ENCODE measurements at regions of chr11 and their contacts with region 1.

Region 1: DNA sequence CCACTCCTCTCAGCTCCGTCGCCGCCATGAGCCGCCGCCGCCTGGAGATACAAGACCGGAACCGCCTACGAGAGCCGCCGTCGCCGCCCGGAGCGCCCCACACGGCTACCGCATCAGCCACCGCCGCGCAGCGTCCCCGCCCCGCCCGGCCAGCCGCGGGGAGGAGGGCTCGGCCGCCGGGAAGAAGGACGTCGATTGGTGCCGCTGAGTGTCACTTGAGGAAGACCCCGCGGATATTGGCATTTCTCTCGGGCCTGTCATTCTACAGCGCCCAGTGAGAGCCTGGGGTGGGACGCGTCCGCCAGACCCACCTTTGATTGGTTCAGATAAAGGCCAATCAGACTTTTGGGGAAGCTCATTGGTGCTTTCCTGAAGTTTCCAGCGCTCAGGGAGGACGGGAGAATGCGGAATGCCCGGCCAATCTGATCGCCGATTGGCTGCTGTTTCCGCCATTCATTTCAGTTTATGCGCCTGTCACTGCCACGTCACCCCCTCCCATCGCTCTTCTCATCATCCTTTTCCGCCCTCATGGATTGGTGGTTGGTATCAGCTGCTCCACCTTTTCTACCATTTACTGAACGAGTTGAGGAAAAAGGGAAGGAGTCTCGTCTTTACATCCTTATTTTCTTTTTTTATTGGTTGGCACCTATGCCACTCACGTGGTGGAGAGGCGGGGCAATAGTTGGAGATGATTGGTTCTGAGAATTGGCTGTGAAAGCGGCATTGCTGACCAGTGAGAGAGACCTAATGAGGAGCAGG is at the start of gene OSBP:
- DNase-seq: peak; percentile 91
- ATAC-seq: peak; percentile 88
- H3K4me3 Mint-ChIP-seq: peak within 1 kb of the TSS; percentile 96
- H3K27ac Mint-ChIP-seq: peak within 1 kb of the TSS; percentile 97
- H3K4me1 Mint-ChIP-seq: peaks cover 33% of the 10 kb centered on the region
- H3K27me3 Mint-ChIP-seq: no peaks in the 10 kb centered on the region
- total RNA-seq, gene OSBP: 41.6 to 41.8 TPM

Region 2: GRCh38 chr11:59560702-59561469 is 54.9 kb before region 1 on chr11:
- POLR2A ChIA-PET with region 1: interaction called, 21 read pairs
- DNase-seq: peak; percentile 74
- ATAC-seq: peak; percentile 57
- H3K4me3 Mint-ChIP-seq: peak overlapping the region; percentile 92
- H3K27ac Mint-ChIP-seq: peak overlapping the region; percentile 97
- H3K4me1 Mint-ChIP-seq: peaks cover 39% of the 10 kb centered on the region
- H3K27me3 Mint-ChIP-seq: peaks cover 5% of the 10 kb centered on the region

Region 3: DNA sequence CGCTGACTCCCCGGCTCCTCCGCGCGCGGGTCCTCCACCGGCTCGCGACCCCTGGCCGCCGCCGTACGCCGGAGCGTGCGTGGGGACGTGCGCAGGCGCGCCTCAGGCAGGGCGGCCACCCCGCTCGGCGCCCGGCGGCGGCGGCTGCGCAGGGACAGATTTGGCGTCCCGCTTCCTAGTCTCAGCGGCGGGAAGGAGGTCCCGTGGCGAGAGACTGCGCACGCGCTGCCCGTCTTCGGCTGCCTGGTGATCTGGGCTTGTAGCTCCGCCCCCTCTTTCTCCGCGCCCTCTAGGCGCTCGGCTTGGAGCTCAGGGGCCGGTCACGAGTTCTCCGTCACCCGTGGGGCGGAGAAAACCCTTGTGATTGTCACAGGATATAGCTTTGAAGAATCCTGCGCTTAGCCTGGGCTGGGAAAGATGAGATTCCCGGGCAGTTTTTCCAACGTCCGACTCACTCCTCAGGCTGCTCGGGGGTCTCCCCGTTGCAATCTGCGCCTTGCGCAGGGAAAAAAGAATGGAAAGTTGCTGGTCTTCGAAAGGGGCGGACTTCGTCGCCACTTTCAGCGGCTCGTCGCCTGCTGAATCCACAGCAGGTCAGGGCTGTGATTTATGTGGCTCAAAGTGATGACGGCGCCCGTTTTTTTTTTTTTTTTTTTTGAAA is 53.3 kb after region 1 on chr11 and contains the start of gene PATL1:
- POLR2A ChIA-PET with region 1: interaction called, 37 read pairs
- DNase-seq: peak; percentile 97
- ATAC-seq: peak; percentile 95
- H3K4me3 Mint-ChIP-seq: peak within 1 kb of the TSS; percentile 97
- H3K27ac Mint-ChIP-seq: peak within 1 kb of the TSS; percentile 99
- H3K4me1 Mint-ChIP-seq: peaks cover 32% of the 10 kb centered on the region
- H3K27me3 Mint-ChIP-seq: no peaks in the 10 kb centered on the region
- total RNA-seq, gene PATL1: 52.9 to 54.1 TPM

Region 4: GRCh38 chr11:59689015-59689414 is 73.2 kb after region 1 on chr11:
- POLR2A ChIA-PET with region 1: no interaction called
- DNase-seq: no peak
- ATAC-seq: no peak
- H3K4me3 Mint-ChIP-seq: no peak overlapping the region
- H3K27ac Mint-ChIP-seq: no peak overlapping the region
- H3K4me1 Mint-ChIP-seq: peaks cover 3% of the 10 kb centered on the region
- H3K27me3 Mint-ChIP-seq: peaks cover 39% of the 10 kb centered on the region

Region 5: GRCh38 chr11:59810189-59810910 is 194.5 kb after region 1 on chr11 and contains the start of gene MRPL16:
- POLR2A ChIA-PET with region 1: interaction called, 12 read pairs
- DNase-seq: peak; percentile 88
- ATAC-seq: peak; percentile 98
- H3K4me3 Mint-ChIP-seq: peak within 1 kb of the TSS; percentile 94
- H3K27ac Mint-ChIP-seq: peak within 1 kb of the TSS; percentile 93
- H3K4me1 Mint-ChIP-seq: peaks cover 27% of the 10 kb centered on the region
- H3K27me3 Mint-ChIP-seq: no peaks in the 10 kb centered on the region
- total RNA-seq, gene MRPL16: 67.2 to 70.0 TPM

Region 6: DNA sequence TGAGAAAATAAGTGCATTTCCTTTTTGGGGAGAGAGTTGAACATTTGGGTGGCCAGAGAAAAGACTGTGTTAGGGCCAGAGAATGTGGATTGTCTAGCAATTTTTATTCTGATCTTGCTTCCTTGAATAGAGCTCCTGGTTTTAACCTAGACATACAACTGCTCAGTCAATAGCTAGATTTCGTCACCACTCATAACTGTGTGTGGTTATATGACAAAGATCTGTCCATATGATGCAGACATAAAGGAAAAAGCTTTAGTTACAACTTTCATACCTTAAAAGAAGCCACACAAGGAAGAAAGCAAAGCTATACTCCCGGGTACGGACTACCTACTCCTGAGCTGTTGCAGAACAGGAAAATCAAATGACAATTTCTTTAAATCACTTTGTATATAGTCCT is 529.9 kb after region 1 on chr11:
- POLR2A ChIA-PET with region 1: no interaction called
- DNase-seq: no peak
- ATAC-seq: no peak
- H3K4me3 Mint-ChIP-seq: no peak overlapping the region
- H3K27ac Mint-ChIP-seq: no peak overlapping the region
- H3K4me1 Mint-ChIP-seq: no peaks in the 10 kb centered on the region
- H3K27me3 Mint-ChIP-seq: peaks cover 4% of the 10 kb centered on the region